T-cell (primary cell): ENCODE measurements at regions of chr1 and their contacts with region 1.

Region 1: DNA sequence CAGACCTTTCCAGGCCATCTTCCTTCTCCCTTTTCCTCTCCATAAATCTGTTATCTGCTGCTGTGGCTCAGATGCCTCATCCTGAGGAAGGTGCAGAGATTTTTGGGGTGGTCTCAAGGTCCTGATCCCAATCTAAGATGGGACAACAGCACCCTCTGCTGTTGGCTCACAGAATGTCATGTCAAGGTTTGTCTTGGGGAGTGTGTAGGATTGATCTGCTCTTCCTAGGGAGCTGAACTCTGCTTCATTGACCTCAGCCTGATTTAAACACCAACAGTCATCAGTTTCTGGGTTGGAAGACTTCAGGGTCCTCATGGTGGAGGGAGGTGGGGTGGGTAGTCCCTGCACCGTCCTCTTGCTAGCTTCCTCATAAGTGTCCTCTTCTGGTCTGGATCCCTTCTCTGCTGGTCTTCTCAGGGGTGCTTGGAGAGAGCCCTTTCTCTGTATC is 62.8 kb upstream of the LAX1 start:
- DNase-seq: peak in 34 of 35 experiments; percentile 24 to 85 (median 54)
- ATAC-seq: peak; percentile 60 to 75 (median 71)
- H3K4me3 ChIP-seq: no peak overlapping the region
- H3K4me3 Mint-ChIP-seq: no peak overlapping the region
- H3K27ac ChIP-seq: no peak overlapping the region
- H3K27ac Mint-ChIP-seq: peak overlapping the region; percentile 73 to 82
- H3K4me1 ChIP-seq: no peaks in the 10 kb centered on the region
- H3K4me1 Mint-ChIP-seq: peaks cover 10 to 15% (median 11%) of the 10 kb centered on the region in 3 donors
- H3K27me3 ChIP-seq: no peaks in the 10 kb centered on the region
- H3K27me3 Mint-ChIP-seq: no peaks in the 10 kb centered on the region

Region 2: GRCh38 chr1:203504397-203505250 is 197.5 kb before region 1 on chr1:
- CTCF ChIA-PET with region 1: interaction called, 30 read pairs
- POLR2A ChIA-PET with region 1: no interaction called
- DNase-seq: peak; percentile 31 to 84 (median 65)
- ATAC-seq: peak; percentile 50 to 82 (median 66)
- H3K4me3 ChIP-seq: no peak overlapping the region
- H3K4me3 Mint-ChIP-seq: no peak overlapping the region
- H3K27ac ChIP-seq: no peak overlapping the region
- H3K27ac Mint-ChIP-seq: no peak overlapping the region
- H3K4me1 ChIP-seq: peaks cover 0 to 2% of the 10 kb centered on the region in 2 experiments
- H3K4me1 Mint-ChIP-seq: peaks cover 2 to 7% (median 5%) of the 10 kb centered on the region in 3 donors
- H3K27me3 ChIP-seq: peaks cover 0 to 5% of the 10 kb centered on the region in 2 experiments
- H3K27me3 Mint-ChIP-seq: peaks cover 0 to 3% of the 10 kb centered on the region in 2 donors

Region 3: DNA sequence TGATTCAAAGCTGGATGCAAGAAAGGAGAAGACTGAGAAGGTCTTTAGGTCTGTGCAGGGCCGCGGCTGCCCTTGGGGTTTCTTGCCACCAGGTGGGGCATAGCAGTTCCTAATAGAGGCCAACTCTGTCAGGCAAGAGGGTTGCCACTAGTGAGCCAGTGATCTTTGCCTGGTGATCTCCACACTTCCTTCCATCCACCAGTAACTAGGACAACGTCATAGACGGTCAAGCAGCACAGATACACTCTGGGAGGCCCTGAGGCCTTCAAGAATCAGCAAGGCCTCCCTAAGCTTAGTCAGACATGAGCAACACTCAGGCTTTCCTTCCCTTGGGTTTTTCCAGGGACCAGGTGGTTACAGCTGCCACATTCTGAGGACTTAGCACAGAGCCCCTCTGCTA is 108.4 kb before region 1 on chr1:
- CTCF ChIA-PET with region 1: interaction called, 8 to 11 read pairs
- POLR2A ChIA-PET with region 1: interaction called in 1 of 2 experiments, 4 read pairs
- DNase-seq: peak; percentile 12 to 75 (median 51)
- ATAC-seq: peak; percentile 62 to 93 (median 90)
- H3K4me3 ChIP-seq: no peak overlapping the region
- H3K4me3 Mint-ChIP-seq: no peak overlapping the region
- H3K27ac ChIP-seq: no peak overlapping the region
- H3K27ac Mint-ChIP-seq: peak overlapping the region in 1 of 2 donors; percentile 53
- H3K4me1 ChIP-seq: peaks cover 0 to 7% of the 10 kb centered on the region in 2 experiments
- H3K4me1 Mint-ChIP-seq: peaks cover 9 to 16% (median 15%) of the 10 kb centered on the region in 3 donors
- H3K27me3 ChIP-seq: peaks cover 0 to under 1% of the 10 kb centered on the region in 2 experiments
- H3K27me3 Mint-ChIP-seq: peaks cover 0 to 4% of the 10 kb centered on the region in 2 donors

Region 4: GRCh38 chr1:203667616-203668015 is 34.5 kb before region 1 on chr1:
- CTCF ChIA-PET with region 1: no interaction called
- POLR2A ChIA-PET with region 1: no interaction called
- DNase-seq: no peak
- ATAC-seq: no peak
- H3K4me3 ChIP-seq: no peak overlapping the region
- H3K4me3 Mint-ChIP-seq: no peak overlapping the region
- H3K27ac ChIP-seq: no peak overlapping the region
- H3K27ac Mint-ChIP-seq: peak overlapping the region; percentile 68 to 75
- H3K4me1 ChIP-seq: peaks cover 34 to 68% of the 10 kb centered on the region in 2 experiments
- H3K4me1 Mint-ChIP-seq: peaks cover 57 to 88% (median 82%) of the 10 kb centered on the region in 3 donors
- H3K27me3 ChIP-seq: no peaks in the 10 kb centered on the region
- H3K27me3 Mint-ChIP-seq: no peaks in the 10 kb centered on the region